A673 (cell line): ENCODE measurements at regions of chr2 and their contacts with region 1.

Region 1: DNA sequence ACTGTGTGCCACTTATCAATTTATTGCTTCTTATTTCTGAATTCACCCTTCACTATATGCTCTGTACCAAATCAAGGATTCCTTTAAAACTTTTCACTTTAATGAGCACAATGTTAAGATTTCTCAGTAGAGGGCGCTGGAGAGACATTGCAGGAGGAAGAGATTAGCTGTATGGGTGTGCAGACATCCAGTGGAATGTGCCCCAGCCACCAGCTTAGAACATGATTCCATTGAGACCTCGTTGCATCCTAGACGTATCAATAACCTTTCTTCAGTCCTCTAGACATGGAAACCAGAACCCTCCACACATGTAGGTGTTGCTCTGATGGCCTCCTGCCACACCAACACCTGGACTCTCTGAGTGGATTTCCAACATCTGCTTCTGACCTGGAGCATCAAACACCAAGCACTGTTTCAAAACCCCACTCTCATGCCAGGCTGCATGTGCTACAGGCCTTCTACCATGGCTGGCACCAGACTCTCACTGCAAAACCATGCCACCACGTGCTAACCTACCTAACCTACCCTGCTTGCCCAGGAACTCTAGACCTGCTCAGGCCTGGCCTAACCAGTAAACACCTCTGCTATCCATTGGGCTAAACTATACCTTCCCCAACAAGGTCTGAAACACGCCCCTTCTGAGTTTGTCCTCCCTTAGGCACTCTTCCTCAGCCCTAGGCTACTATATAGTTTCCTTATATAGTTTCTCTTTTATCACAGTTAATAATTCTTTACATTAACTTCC is 633.2 kb upstream of the PKDCC start:
- DNase-seq: peak; percentile 74
- H3K4me3 ChIP-seq: no peak overlapping the region
- H3K27ac ChIP-seq: no peak overlapping the region
- H3K4me1 ChIP-seq: no peaks in the 10 kb centered on the region
- H3K27me3 ChIP-seq: peaks cover 18% of the 10 kb centered on the region
- CTCF ChIP-seq: peak; percentile 83

Region 2: DNA sequence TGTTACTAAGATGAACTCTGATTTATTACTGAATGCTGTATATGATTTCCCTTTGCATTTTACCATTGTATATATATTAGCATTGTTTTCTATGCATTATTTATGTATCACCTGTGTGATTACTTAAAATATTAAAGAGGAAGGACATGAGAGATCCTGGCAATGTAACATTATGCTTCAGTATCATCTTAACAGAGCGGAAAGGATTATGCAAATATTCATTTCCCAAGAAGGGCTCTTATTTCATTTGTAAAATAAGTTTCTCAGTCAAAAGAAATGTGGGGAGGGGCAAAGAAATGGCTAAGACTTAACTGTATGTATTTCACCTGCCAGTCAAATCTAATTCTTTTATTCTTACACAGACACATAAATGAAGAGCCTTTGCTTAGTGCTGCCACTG is 21.0 kb before region 1 on chr2:
- CTCF ChIA-PET with region 1: no interaction called
- POLR2A ChIA-PET with region 1: no interaction called
- intact Hi-C with region 1: no loop called
- DNase-seq: peak; percentile 49
- H3K4me3 ChIP-seq: no peak overlapping the region
- H3K27ac ChIP-seq: no peak overlapping the region
- H3K4me1 ChIP-seq: peaks cover 11% of the 10 kb centered on the region
- H3K27me3 ChIP-seq: peaks cover 6% of the 10 kb centered on the region
- CTCF ChIP-seq: no peak

Region 3: DNA sequence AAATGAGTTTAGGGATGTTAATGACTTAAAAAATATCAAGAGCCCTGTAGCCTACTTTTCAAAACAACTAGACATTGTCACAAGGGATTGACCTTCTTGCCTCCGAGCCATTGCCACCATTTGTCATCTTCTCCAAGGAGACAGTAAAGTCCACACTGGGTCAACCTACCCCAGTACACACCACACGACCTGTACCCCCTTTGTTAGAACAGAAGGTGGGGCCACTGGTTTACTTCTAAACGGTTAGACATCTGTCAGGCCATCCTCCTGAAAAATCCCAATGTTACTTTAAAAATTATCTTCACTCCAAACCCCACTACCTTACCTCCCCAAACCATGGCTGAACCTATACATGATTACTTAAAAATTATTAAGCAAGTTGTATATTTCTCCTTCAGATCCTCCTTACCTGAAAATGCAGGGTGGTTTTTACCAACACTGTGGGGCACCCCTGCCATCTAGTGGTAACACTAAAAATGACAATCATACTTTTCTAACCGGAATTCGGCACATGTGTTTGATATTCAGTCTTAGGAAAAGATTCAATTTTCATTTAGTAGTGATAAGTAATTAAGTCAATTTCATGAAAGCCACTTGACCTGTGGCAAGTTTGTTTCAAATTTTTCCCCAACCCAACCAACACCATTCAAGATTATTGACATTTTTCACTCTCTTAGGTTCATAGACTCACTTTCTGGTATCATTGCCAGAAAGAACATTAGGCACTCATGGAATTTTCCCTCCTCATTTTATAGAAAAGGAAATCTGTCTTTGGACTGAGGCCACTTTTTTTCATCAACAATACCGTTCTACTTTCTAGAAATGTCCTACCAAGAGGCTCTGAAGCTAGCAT is 367.9 kb after region 1 on chr2:
- CTCF ChIA-PET with region 1: no interaction called
- POLR2A ChIA-PET with region 1: no interaction called
- intact Hi-C with region 1: loop called (anchors 1 kb)
- DNase-seq: peak; percentile 55
- H3K4me3 ChIP-seq: no peak overlapping the region
- H3K27ac ChIP-seq: no peak overlapping the region
- H3K4me1 ChIP-seq: no peaks in the 10 kb centered on the region
- H3K27me3 ChIP-seq: peaks cover 9% of the 10 kb centered on the region
- CTCF ChIP-seq: peak; percentile 86